AG04449 (cell line): ENCODE measurements at regions of chr19 and their contacts with region 1.

Region 1: DNA sequence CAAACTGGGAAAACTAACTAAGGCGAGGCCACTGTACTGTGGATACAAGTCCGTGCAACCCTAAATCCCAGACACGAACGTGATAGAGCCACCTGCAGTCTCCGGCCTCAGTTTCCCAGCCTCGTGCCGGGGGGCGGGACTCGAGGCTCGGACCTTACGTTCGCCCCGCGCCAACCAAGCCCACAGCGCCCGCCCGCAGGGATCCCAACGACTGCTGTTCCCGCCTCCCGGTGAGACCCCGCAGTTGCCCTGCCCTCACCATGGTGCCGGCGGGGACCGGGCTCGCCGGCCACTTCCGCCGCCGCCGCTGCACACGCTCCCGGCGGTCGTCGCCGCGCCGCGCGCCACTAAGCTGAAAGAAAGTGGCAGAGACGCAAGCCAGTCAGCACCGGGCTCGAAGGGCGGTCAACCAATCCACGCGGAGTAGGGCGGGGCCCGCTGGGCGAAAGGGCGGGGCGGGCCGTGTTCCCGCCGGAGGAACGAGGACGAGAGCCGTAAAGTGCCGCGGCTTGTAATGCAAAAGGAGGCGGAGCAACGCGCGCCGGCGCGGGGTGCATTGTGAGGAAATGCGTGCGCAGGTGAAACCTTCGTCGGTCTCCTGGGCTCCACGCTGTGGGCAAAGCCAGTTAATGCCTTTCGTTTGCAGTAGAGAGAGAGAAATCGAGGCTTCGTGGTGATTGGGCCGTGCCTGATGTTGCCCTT is at the start of gene LSM4:
- DNase-seq: peak; percentile 65
- H3K4me3 ChIP-seq: peak within 1 kb of the TSS; percentile 84
- CTCF ChIP-seq: peak; percentile 41

Region 2: DNA sequence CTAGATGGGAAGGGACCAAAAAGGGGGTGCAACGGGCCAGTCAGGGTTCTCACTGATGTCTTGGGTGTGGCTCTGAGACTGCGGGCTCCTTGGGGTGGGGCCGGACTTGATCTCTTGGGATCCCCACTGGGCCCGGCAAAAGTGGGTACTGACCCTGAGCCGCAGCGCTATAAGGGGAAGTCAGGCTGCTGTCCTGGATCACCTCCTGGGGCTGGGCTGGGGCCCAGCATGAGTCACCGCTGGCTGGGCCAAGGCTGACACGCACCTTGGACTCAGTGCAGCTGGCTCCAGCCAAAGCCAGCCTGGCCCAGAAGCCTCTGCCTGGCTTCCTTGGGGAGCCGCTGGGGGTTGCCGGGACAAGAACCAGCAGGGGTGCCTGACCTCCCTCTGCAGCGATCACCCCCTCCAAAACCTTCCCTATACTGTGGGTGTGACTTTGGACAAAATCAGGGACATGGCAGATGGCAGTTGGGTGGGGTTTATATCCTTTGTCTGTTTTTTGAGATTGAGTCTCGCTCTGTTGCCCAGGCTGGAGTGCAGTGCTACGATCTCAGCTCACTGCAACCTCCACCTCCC is 48.0 kb before region 1 on chr19:
- CTCF ChIA-PET with region 1: interaction called, 321 read pairs
- POLR2A ChIA-PET with region 1: interaction called, 146 read pairs
- DNase-seq: no peak
- H3K4me3 ChIP-seq: no peak overlapping the region
- CTCF ChIP-seq: no peak

Region 3: GRCh38 chr19:18291590-18292461 is 31.1 kb before region 1 on chr19:
- CTCF ChIA-PET with region 1: interaction called, 9 read pairs
- POLR2A ChIA-PET with region 1: interaction called, 13 read pairs
- DNase-seq: no peak
- H3K4me3 ChIP-seq: peak overlapping the region; percentile 61
- CTCF ChIP-seq: no peak

Region 4: GRCh38 chr19:18304458-18305310 is 18.2 kb before region 1 on chr19:
- CTCF ChIA-PET with region 1: interaction called, 9 read pairs
- POLR2A ChIA-PET with region 1: interaction called, 11 read pairs
- DNase-seq: no peak
- H3K4me3 ChIP-seq: peak overlapping the region; percentile 45
- CTCF ChIP-seq: no peak

Region 5: GRCh38 chr19:18333662-18334389 is 10.9 kb after region 1 on chr19:
- CTCF ChIA-PET with region 1: interaction called, 69 read pairs
- POLR2A ChIA-PET with region 1: no interaction called
- DNase-seq: no peak
- H3K4me3 ChIP-seq: no peak overlapping the region
- CTCF ChIP-seq: no peak

Region 6: DNA sequence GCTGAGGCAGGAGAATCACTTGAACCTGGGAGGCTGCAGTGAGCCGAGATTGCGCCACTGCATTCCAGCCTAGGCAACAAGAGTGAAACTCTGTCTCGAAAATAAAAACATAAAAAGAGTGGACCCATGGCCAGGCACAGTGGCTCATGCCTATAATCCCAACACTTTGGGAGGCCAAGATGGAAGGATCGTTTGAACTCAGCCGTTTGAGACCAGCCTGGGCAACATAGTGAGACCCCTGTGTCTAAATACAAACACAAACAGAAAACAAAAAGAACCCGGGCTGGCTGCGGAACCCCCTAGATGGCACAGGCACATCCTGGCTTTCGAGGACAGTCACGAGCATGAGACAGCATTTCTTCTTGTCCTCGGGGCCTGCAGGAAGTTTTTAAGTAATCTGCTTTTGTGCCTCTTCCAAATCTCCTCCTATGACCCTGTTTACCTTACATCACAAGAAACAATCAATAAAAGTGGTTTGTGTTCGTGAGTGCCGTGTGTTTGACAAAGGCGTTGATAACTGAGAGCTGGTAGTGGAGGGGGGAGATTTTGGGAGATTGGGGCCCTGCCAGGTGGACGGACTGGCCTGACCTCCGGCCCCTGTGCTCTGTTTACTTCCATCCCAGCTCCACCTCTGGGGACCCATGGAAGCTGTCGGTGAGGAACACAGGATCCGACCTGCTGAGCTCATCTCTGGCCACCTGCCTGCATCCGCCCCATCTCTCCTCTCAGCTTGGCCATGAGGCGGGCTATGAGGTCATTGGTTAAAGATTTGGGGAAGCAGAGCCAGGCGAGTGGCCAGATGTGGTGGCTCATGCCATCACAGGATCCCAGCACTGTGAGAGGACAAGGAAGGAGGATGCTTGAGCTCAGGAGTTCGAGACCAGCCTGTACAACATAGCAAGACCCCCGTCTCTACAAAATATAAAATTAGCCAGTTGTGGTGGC is 57.2 kb after region 1 on chr19:
- CTCF ChIA-PET with region 1: no interaction called
- POLR2A ChIA-PET with region 1: no interaction called
- DNase-seq: no peak
- H3K4me3 ChIP-seq: no peak overlapping the region
- CTCF ChIP-seq: no peak

Region 7: GRCh38 chr19:18423258-18424020 is 100.5 kb after region 1 on chr19:
- CTCF ChIA-PET with region 1: no interaction called
- POLR2A ChIA-PET with region 1: no interaction called
- DNase-seq: no peak
- H3K4me3 ChIP-seq: no peak overlapping the region
- CTCF ChIP-seq: no peak